BJ (cell line): ENCODE measurements at regions of chr11 and their contacts with region 1.

Region 1: DNA sequence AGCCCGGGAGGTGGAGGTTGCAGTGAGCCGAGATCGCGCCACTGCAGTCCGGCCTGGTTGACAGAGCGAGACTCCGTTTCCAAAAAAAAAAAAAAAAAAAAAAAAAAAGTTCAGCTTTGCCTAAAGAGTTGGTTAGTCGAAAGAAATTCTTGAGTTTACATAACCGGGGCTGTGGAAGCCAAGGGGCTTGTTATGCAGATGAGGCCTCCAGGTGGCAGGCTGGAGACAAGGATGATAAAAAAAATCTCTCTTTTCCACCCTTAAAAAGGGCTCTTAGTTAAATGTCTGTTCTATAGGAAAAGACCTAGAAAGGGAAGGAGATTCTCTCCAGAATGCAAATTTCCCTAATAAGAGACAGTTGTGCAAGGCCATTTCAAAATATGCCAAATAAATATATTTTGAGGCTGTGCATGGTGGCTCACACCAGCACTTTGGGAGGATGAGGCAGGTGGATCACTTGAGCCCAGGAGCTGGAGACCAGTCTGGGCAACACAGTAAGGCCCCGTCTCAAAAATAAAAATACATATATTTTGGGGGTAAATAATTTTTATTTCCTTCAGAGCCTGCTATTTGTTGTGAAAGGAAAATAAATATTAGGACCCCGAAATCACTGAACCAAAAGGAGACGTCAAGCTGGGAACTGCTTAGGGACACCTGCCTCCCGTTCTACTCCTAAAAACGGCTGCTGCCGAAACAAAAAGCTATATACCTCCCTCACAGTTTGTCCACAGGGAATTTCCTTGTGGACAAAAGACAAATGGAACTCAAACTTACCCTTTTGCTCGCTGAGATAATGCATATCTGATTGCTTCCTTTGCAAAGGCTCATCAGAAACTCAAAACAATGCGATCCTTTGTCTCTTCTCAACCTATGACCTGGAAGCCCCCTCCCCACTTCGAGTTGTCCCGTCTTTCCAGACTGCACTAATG is 2.4 kb upstream of the IFITM2 start:
- DNase-seq: no peak
- H3K4me3 ChIP-seq: no peak overlapping the region
- H3K27me3 ChIP-seq: peaks cover under 1% of the 10 kb centered on the region; the same call in 1 of the 2 replicates
- CTCF ChIP-seq: peak; percentile 80

Region 2: DNA sequence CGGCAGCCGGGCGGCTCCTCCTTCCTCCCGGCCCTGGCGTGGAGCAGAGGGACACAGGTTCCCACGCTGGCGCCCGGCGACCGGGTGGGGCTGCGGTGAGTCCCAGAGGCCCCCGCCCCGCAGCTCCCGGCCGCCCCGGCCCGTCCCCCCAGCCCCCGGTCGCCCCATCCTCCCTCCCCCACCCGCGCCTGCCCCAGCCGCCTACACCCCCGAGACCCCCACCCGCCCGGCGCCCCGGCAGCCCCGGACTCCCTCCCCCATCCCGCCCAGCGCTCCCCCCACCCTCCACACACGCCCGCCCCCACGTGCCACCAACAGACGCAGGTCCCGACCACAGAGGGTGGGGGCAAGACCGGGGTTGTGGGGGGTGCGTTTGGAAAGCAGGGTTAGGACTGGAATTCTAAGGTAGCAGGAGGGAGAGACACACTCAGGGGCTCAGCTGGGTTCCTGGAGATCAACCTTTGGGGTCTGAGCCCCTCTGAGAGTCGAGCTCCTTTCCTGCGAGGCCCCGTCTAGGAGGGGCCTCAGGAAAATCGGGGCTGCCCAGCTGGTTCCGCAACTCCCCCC is 16.0 kb before region 1 on chr11:
- CTCF ChIA-PET with region 1: interaction called, 23 read pairs
- POLR2A ChIA-PET with region 1: no interaction called
- DNase-seq: no peak
- H3K4me3 ChIP-seq: peak overlapping the region; percentile 41
- H3K27me3 ChIP-seq: peaks cover 9% of the 10 kb centered on the region
- CTCF ChIP-seq: no peak

Region 3: GRCh38 chr11:355581-356458 is 50.6 kb after region 1 on chr11:
- CTCF ChIA-PET with region 1: interaction called, 30 read pairs
- POLR2A ChIA-PET with region 1: no interaction called
- DNase-seq: peak; percentile 76
- H3K4me3 ChIP-seq: peak overlapping the region; percentile 32
- H3K27me3 ChIP-seq: no peaks in the 10 kb centered on the region; the same call in 1 of the 2 replicates
- CTCF ChIP-seq: no peak

Region 4: DNA sequence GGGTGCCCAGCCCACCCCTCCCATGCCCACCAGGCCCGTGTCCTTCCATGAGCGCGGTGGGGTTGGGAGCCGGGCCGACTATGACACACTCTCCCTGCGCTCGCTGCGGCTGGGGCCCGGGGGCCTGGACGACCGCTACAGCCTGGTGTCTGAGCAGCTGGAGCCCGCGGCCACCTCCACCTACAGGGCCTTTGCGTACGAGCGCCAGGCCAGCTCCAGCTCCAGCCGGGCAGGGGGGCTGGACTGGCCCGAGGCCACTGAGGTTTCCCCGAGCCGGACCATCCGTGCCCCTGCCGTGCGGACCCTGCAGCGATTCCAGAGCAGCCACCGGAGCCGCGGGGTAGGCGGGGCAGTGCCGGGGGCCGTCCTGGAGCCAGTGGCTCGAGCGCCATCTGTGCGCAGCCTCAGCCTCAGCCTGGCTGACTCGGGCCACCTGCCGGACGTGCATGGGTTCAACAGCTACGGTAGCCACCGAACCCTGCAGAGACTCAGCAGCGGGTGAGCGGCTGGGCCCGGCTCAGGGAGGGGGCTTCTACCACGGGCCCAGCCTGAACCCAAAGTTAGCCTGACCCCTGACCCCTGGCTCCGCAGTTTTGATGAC is 91.9 kb after region 1 on chr11:
- CTCF ChIA-PET with region 1: interaction called, 11 read pairs
- POLR2A ChIA-PET with region 1: no interaction called
- DNase-seq: no peak
- H3K4me3 ChIP-seq: peak overlapping the region; percentile 38
- H3K27me3 ChIP-seq: no peaks in the 10 kb centered on the region
- CTCF ChIP-seq: peak; percentile 75